Activated naive CD4-positive, alpha-beta T cell treated with anti-CD3 and anti-CD28 coated beads for 36 hours (primary cell): ENCODE measurements at regions of chr1 and their contacts with region 1.

Region 1: DNA sequence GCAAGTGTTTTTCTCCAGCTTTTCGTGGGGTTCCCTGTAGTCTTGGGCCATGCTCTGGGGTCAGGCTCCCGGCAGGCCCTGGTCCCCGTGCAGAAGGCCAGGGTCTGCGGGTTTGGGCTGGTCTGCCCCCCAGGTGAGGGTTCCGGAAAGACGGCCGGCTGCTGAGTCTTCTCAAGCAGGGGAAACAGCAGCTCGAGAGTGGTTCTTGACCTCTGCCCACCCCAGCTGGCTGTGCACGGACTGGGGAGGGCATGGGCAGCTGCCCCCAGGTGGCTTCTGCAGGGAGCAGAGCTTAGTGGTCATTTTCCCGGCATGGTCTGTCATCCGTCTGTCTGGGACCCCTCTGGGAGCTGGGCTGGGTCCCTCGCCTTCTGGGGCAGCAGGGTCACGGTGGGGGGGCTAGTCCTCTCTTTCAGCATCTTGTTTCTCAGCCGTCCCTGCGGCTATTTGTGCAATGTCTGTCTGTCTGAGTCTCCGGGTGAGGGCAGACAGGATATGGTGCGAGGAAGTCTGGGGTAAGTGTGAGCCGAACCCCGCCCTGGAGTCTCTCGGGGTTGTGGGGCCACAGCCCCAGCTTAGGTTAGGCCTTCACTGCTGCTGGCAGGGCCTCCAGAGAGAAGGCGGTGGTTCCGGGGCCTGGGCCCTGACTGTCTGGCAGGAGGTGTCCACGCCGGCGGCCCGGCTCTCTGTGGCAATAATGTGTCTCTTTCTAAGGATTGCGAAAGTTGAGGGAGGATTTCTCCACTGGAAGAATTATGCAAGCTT is 6.1 kb downstream of the SKI start:
- DNase-seq: peak; percentile 82
- H3K4me3 Mint-ChIP-seq: peak overlapping the region; percentile 98
- H3K27ac Mint-ChIP-seq: peak overlapping the region; percentile 94
- H3K4me1 Mint-ChIP-seq: peaks cover 61% of the 10 kb centered on the region
- H3K27me3 Mint-ChIP-seq: no peaks in the 10 kb centered on the region

Region 2: GRCh38 chr1:2205191-2205952 is 28.8 kb before region 1 on chr1:
- CTCF ChIA-PET with region 1: interaction called, 3 read pairs
- intact Hi-C with region 1: loop called (anchors 2 kb)
- DNase-seq: peak; percentile 96
- H3K4me3 Mint-ChIP-seq: peak overlapping the region; percentile 52
- H3K27ac Mint-ChIP-seq: no peak overlapping the region
- H3K4me1 Mint-ChIP-seq: no peaks in the 10 kb centered on the region
- H3K27me3 Mint-ChIP-seq: no peaks in the 10 kb centered on the region

Region 3: GRCh38 chr1:2247760-2248126 is 13.6 kb after region 1 on chr1:
- CTCF ChIA-PET with region 1: interaction called, 3 read pairs
- intact Hi-C with region 1: loop called (anchors 2 kb)
- DNase-seq: no peak
- H3K4me3 Mint-ChIP-seq: no peak overlapping the region
- H3K27ac Mint-ChIP-seq: no peak overlapping the region
- H3K4me1 Mint-ChIP-seq: peaks cover 86% of the 10 kb centered on the region
- H3K27me3 Mint-ChIP-seq: no peaks in the 10 kb centered on the region

Region 4: GRCh38 chr1:2255420-2256369 is 21.5 kb after region 1 on chr1:
- CTCF ChIA-PET with region 1: no interaction called
- intact Hi-C with region 1: loop called (anchors 2 kb)
- DNase-seq: peak; percentile 94
- H3K4me3 Mint-ChIP-seq: no peak overlapping the region
- H3K27ac Mint-ChIP-seq: no peak overlapping the region
- H3K4me1 Mint-ChIP-seq: peaks cover 66% of the 10 kb centered on the region
- H3K27me3 Mint-ChIP-seq: no peaks in the 10 kb centered on the region

Region 5: DNA sequence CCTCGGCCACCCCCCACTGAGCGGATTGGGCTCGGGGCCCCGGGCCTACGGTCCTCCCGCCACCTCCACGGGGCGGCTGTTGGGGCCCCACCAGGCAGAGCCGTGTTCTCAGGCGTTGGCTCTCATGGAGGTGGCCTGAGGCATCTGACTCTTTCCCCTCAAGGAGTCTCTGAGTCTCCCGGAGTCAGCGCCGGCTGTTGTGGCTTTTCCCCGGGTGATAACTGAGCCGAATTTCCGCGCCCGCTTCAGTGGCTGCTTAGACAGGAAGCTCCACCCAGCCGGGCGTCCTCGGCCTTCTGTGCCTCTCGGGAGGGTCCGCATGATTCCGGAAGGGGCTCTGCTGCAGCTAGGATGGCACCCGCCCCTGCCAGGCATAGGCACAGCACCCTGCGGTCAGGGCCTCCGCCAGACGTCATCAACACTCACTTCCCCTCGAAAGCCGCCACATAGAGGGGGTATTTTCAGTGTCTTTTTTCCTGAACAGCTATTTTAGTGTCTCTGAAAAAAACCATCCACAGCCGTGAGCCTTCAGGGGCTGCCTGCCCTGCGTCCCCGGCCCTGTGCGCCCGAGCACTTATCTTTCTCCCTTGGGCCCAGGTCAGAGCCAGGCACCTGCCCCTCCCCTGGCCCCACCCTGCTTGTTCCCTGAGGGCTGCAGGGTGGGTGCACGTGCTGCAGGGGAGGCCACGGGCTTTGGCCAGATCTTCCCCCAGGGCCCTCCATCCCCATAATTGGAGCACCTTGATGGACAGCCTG is 66.8 kb after region 1 on chr1:
- CTCF ChIA-PET with region 1: interaction called, 3 read pairs
- intact Hi-C with region 1: loop called (anchors 1 kb)
- DNase-seq: peak; percentile 96
- H3K4me3 Mint-ChIP-seq: peak overlapping the region; percentile 77
- H3K27ac Mint-ChIP-seq: peak overlapping the region; percentile 98
- H3K4me1 Mint-ChIP-seq: peaks cover 60% of the 10 kb centered on the region
- H3K27me3 Mint-ChIP-seq: no peaks in the 10 kb centered on the region

Region 6: GRCh38 chr1:2391041-2391930 is 157.1 kb after region 1 on chr1 and contains the starts of genes MORN1 and RER1:
- CTCF ChIA-PET with region 1: no interaction called
- intact Hi-C with region 1: loop called (anchors 1 kb)
- DNase-seq: peak; percentile 99
- H3K4me3 Mint-ChIP-seq: peak within 1 kb of the TSS; percentile 88
- H3K27ac Mint-ChIP-seq: peak within 1 kb of the TSS; percentile 79
- H3K4me1 Mint-ChIP-seq: peaks cover 40% of the 10 kb centered on the region
- H3K27me3 Mint-ChIP-seq: no peaks in the 10 kb centered on the region
- total RNA-seq, gene MORN1: 3.2 to 4.9 TPM
- total RNA-seq, gene RER1: 115 to 124 TPM